Naive thymus-derived CD8-positive, alpha-beta T cell (primary cell): ENCODE measurements at regions of chr9 and their contacts with region 1.

Region 1: GRCh38 chr9:127930231-127931091 is at the start of gene PIP5KL1:
- DNase-seq: peak; percentile 36 to 78 (median 71)
- ATAC-seq: peak; percentile 59 to 65
- H3K4me3 Mint-ChIP-seq: peak within 1 kb of the TSS; percentile 70 to 85 (median 80)
- H3K27ac Mint-ChIP-seq: peak within 1 kb of the TSS; percentile 31 to 92 (median 78)
- H3K4me1 Mint-ChIP-seq: peaks cover 15 to 47% (median 42%) of the 10 kb centered on the region in 4 donors
- H3K27me3 Mint-ChIP-seq: peaks cover 0 to 2% (median 0%) of the 10 kb centered on the region in 5 donors
- polyA plus RNA-seq, gene PIP5KL1: 0.28 to 0.46 TPM in 2 of 3 donors, not detected in the other

Region 2: GRCh38 chr9:127779136-127779981 is 151.1 kb before region 1 on chr9:
- POLR2A ChIA-PET with region 1: no interaction called
- DNase-seq: no peak
- ATAC-seq: peak; percentile 9 to 29
- H3K4me3 Mint-ChIP-seq: peak overlapping the region; percentile 90 to 100 (median 98)
- H3K27ac Mint-ChIP-seq: peak overlapping the region; percentile 71 to 99 (median 96)
- H3K4me1 Mint-ChIP-seq: peaks cover 30 to 79% (median 62%) of the 10 kb centered on the region in 4 donors
- H3K27me3 Mint-ChIP-seq: no peaks in the 10 kb centered on the region

Region 3: DNA sequence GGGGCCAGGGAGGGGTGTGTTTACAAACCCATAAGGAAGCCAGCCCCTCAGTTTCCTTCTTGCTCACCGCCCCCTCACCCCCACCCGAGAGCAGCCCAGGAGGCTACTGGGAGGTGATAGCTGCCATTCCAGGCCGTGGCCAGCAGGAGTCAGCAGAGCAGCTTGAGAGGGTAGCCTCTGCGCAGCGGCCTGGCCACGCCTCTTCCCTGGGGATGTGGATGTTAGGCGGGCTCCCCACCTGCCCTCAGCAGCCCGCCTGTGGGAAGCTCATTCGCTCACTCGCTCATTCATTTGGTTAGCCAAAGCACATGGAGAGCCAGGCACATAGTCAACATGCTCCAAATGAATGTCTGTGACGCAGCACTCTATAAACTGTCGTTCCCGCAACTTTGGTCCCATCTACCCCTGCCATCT is 13.3 kb after region 1 on chr9:
- POLR2A ChIA-PET with region 1: interaction called, 2,190 read pairs
- DNase-seq: peak; percentile 61 to 89 (median 74)
- ATAC-seq: peak; percentile 73 to 81
- H3K4me3 Mint-ChIP-seq: peak overlapping the region in 7 of 10 donors; percentile 3 to 63 (median 26)
- H3K27ac Mint-ChIP-seq: peak overlapping the region; percentile 47 to 96 (median 92)
- H3K4me1 Mint-ChIP-seq: peaks cover 18 to 65% (median 47%) of the 10 kb centered on the region in 4 donors
- H3K27me3 Mint-ChIP-seq: no peaks in the 10 kb centered on the region